ENCODE measurements at regions of chr1 and their contacts with region 1.

Region 1: DNA sequence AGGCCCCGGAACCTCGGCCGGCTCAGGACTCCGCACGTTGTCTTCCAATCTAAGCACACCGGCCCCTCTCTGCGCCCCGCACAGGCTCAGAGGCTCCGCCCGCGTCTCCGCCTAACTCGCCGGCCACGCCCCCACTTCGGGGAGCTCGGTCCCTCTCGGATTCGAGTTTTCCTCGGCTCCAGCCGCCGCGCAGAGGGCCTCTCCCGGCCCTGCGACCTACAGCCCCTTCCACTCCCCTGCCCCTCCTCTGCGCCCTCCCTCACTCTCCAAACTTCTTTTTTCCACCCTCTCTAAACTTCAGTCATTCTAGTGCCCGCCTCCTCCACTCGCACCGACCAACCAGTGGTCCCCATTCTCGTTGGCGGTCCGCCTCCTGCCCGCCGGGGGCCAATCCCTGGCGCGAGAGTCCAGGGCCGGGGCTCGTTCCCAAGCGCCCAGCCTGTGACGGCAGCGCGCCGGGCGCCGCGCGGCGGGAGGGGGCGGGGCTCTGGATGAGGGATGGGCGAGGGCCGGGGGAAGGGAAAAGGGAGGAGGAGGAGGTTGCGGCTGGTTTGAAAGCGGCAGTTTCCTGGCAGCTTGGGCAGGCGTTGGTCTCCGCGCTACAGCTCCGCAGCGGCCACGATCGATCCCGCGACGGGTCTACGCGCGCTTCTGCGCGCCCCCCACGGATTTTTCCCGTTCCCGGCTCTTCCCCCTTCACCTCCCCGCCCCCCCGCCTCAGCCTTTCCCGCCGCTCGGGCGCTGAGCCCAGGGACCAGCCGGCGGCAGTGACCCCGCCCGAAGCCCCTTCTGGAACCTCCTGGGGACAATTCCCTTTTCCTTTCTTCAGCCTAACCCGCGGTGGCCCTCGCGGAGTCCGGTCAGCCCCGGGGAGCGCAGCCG is at the start of gene MAGI3:
- DNase-seq: peak; percentile 97 to 99
- H3K4me3 ChIP-seq: peak within 1 kb of the TSS; percentile 78
- H3K27ac ChIP-seq: peak within 1 kb of the TSS; percentile 65
- H3K4me1 ChIP-seq: peaks cover 57% of the 10 kb centered on the region
- H3K27me3 ChIP-seq: no peaks in the 10 kb centered on the region
- CTCF ChIP-seq: no peak
- total RNA-seq, gene MAGI3: 17.3 and 18.5 TPM in 2 replicates

Region 2: GRCh38 chr1:113140588-113141446 is 249.4 kb before region 1 on chr1:
- CTCF ChIA-PET with region 1: no interaction called
- POLR2A ChIA-PET with region 1: interaction called, 7 read pairs
- intact Hi-C with region 1: loop called (anchors 1 kb)
- DNase-seq: peak; percentile 58 to 61
- H3K4me3 ChIP-seq: no peak overlapping the region
- H3K27ac ChIP-seq: peak overlapping the region; percentile 31; the same call in 1 of the 2 replicates
- H3K4me1 ChIP-seq: peaks cover 16% of the 10 kb centered on the region
- H3K27me3 ChIP-seq: no peaks in the 10 kb centered on the region
- CTCF ChIP-seq: peak; percentile 99

Region 3: GRCh38 chr1:113199760-113200455 is 190.3 kb before region 1 on chr1:
- CTCF ChIA-PET with region 1: interaction called, 3 read pairs
- POLR2A ChIA-PET with region 1: no interaction called
- intact Hi-C with region 1: loop called (anchors 2 kb)
- DNase-seq: peak in 1 of 2 experiments; percentile 89
- H3K4me3 ChIP-seq: no peak overlapping the region
- H3K27ac ChIP-seq: peak overlapping the region; percentile 5
- H3K4me1 ChIP-seq: peaks cover 42% of the 10 kb centered on the region
- H3K27me3 ChIP-seq: no peaks in the 10 kb centered on the region
- CTCF ChIP-seq: no peak

Region 4: GRCh38 chr1:113307771-113308445 is 82.3 kb before region 1 on chr1:
- CTCF ChIA-PET with region 1: no interaction called
- POLR2A ChIA-PET with region 1: no interaction called
- intact Hi-C with region 1: no loop called
- DNase-seq: peak; percentile 10 to 99
- H3K4me3 ChIP-seq: peak overlapping the region; percentile 25; the same call in 1 of the 2 replicates
- H3K27ac ChIP-seq: peak overlapping the region; percentile 95
- H3K4me1 ChIP-seq: peaks cover 27% of the 10 kb centered on the region
- H3K27me3 ChIP-seq: no peaks in the 10 kb centered on the region
- CTCF ChIP-seq: no peak

Region 5: DNA sequence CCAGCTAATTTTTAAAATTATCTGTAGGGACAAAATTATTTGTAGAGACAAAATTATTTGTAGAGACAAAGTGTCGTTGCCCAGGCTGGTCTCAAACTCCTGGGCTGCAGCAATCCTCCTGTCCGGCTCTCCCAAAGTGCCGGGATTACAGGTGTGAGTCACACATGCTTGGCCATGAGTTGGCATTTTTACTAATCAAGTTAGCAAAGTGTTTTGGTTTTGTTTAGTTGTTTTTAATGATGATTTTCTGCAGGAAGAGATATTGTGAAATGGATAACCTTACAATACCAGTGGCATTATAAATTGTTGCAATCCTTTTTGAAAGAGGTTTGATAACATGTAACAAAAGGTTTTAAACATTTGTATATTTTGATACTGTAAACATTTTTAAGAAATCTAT is 65.2 kb before region 1 on chr1:
- CTCF ChIA-PET with region 1: interaction called, 7 read pairs
- POLR2A ChIA-PET with region 1: interaction called, 12 read pairs
- intact Hi-C with region 1: loop called (anchors 2 kb)
- DNase-seq: peak; percentile 56 to 92
- H3K4me3 ChIP-seq: 0 out of 2 replicates have a peak overlapping the region, but pooled peaks have one; percentile 4
- H3K27ac ChIP-seq: peak overlapping the region; percentile 88
- H3K4me1 ChIP-seq: peaks cover 54% of the 10 kb centered on the region
- H3K27me3 ChIP-seq: no peaks in the 10 kb centered on the region
- CTCF ChIP-seq: no peak

Region 6: GRCh38 chr1:113519556-113519955 is 129.4 kb after region 1 on chr1:
- CTCF ChIA-PET with region 1: no interaction called
- POLR2A ChIA-PET with region 1: no interaction called
- intact Hi-C with region 1: loop called (anchors 5 kb)
- DNase-seq: no peak
- H3K4me3 ChIP-seq: no peak overlapping the region
- H3K27ac ChIP-seq: no peak overlapping the region
- H3K4me1 ChIP-seq: peaks cover 16% of the 10 kb centered on the region
- H3K27me3 ChIP-seq: no peaks in the 10 kb centered on the region
- CTCF ChIP-seq: no peak

Region 7: GRCh38 chr1:113677250-113678158 is 287.3 kb after region 1 on chr1:
- CTCF ChIA-PET with region 1: no interaction called
- POLR2A ChIA-PET with region 1: no interaction called
- intact Hi-C with region 1: loop called (anchors 10 kb)
- DNase-seq: peak in 1 of 2 experiments; percentile 59
- H3K4me3 ChIP-seq: no peak overlapping the region
- H3K27ac ChIP-seq: no peak overlapping the region
- H3K4me1 ChIP-seq: peaks cover 17% of the 10 kb centered on the region
- H3K27me3 ChIP-seq: no peaks in the 10 kb centered on the region
- CTCF ChIP-seq: peak; percentile 97

Region 8: GRCh38 chr1:113811888-113812660 is 421.9 kb after region 1 on chr1 and contains the start of gene RSBN1:
- CTCF ChIA-PET with region 1: interaction called, 21 read pairs
- POLR2A ChIA-PET with region 1: no interaction called
- intact Hi-C with region 1: no loop called
- DNase-seq: peak; percentile 98 to 99
- H3K4me3 ChIP-seq: peak within 1 kb of the TSS; percentile 72
- H3K27ac ChIP-seq: peak within 1 kb of the TSS; percentile 23
- H3K4me1 ChIP-seq: peaks cover 32% of the 10 kb centered on the region
- H3K27me3 ChIP-seq: no peaks in the 10 kb centered on the region
- CTCF ChIP-seq: no peak
- total RNA-seq, gene RSBN1: 11.3 and 12.3 TPM in 2 replicates